PC-9 (cell line): ENCODE measurements at regions of chr19 and their contacts with region 1.

Region 1: DNA sequence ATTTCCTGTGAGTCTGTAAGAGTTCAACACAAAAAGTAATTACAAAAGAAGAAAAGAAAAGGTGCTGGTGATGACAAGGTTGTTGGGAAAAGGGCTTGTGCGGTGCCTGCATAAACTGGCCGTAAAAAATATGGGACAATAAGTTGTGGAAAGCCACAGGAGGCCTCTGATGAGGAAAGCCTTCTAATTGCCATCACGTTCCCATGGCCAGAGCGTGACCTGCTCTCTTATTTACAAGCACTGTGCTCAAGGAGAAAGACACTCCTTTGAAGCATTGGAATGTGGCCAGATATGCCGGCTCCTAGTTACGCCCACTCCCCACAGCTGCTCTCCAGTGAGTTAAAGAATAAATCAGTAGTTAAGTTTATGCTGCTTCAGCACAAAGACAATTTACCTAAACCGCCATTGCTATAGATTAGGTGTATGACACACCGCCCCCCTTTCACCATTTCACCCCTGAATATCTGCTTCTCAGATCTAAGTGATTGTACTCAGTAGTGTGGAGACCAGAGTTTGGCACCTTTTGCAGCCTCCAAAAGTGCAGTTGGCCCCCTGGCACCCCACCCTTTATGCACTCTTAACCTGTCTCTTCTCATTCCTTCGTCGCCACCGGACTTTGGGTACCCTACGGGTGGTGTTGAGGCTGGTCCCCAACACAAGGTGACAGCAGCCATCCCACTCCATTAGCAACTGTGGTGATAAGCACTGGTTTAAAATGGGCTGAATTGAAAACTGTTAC is 8.1 kb upstream of the PGLYRP1 start:
- DNase-seq: no peak
- H3K4me3 ChIP-seq: no peak overlapping the region
- H3K27ac ChIP-seq: no peak overlapping the region
- H3K4me1 ChIP-seq: no peaks in the 10 kb centered on the region; the same call in 1 of the 2 replicates
- H3K27me3 ChIP-seq: no peaks in the 10 kb centered on the region
- CTCF ChIP-seq: no peak

Region 2: DNA sequence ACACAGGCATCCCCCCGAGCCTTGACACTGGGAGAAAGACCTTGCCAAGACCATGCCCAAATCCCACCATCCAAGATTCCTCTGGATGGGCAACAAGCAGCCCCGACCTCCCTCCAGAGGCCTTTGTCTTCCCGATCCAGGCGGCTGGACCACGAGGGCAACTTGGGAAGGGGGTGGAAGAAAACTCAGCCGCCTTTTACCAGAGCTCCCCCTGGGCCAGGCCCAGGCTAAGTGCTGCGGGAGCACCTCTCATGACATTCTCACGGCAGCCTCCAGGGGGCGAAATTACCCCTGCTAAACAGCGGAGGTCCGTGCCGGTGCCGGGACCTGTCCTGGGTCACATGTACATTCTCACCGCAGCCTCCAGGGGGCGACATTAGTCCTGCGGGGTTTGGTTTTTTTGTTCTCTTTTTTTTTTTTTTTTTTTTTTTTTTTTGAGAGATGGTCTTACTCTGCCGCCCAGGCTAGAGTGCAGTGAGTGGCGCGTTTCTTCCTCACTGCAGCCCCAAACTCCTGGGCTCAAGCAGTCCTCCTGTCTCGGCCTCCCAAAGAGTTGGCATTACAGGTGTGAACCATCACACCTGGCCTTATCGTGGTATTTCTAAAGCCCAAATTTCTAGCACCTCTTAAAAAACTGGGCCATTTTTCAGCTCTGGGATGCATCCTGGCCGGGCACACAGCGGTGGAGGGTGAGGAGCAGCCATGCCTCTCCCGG is 213.8 kb before region 1 on chr19:
- CTCF ChIA-PET with region 1: interaction called, 3 read pairs
- POLR2A ChIA-PET with region 1: no interaction called
- intact Hi-C with region 1: loop called (anchors 2 kb)
- DNase-seq: peak; percentile 86 to 95
- H3K4me3 ChIP-seq: no peak overlapping the region
- H3K27ac ChIP-seq: no peak overlapping the region
- H3K4me1 ChIP-seq: no peaks in the 10 kb centered on the region
- H3K27me3 ChIP-seq: no peaks in the 10 kb centered on the region
- CTCF ChIP-seq: peak; percentile 99

Region 3: GRCh38 chr19:46192992-46193650 is 162.1 kb after region 1 on chr19:
- CTCF ChIA-PET with region 1: no interaction called
- POLR2A ChIA-PET with region 1: no interaction called
- intact Hi-C with region 1: loop called (anchors 1 kb)
- DNase-seq: peak; percentile 74 to 94
- H3K4me3 ChIP-seq: no peak overlapping the region; the same call in 1 of the 2 replicates
- H3K27ac ChIP-seq: peak overlapping the region; percentile 82
- H3K4me1 ChIP-seq: peaks cover 63% of the 10 kb centered on the region
- H3K27me3 ChIP-seq: no peaks in the 10 kb centered on the region
- CTCF ChIP-seq: no peak

Region 4: GRCh38 chr19:46254776-46255175 is 223.8 kb after region 1 on chr19:
- CTCF ChIA-PET with region 1: no interaction called
- POLR2A ChIA-PET with region 1: no interaction called
- intact Hi-C with region 1: no loop called
- DNase-seq: peak in 1 of 2 experiments; percentile 93
- H3K4me3 ChIP-seq: no peak overlapping the region
- H3K27ac ChIP-seq: peak overlapping the region; percentile 69
- H3K4me1 ChIP-seq: peaks cover 86% of the 10 kb centered on the region
- H3K27me3 ChIP-seq: no peaks in the 10 kb centered on the region
- CTCF ChIP-seq: no peak